ENCODE measurements at regions of chr19 and their contacts with region 1.

Region 1: GRCh38 chr19:924943-925525 is 801 bp upstream of the ARID3A start:
- DNase-seq: no peak
- ATAC-seq: peak; percentile 66

Region 2: DNA sequence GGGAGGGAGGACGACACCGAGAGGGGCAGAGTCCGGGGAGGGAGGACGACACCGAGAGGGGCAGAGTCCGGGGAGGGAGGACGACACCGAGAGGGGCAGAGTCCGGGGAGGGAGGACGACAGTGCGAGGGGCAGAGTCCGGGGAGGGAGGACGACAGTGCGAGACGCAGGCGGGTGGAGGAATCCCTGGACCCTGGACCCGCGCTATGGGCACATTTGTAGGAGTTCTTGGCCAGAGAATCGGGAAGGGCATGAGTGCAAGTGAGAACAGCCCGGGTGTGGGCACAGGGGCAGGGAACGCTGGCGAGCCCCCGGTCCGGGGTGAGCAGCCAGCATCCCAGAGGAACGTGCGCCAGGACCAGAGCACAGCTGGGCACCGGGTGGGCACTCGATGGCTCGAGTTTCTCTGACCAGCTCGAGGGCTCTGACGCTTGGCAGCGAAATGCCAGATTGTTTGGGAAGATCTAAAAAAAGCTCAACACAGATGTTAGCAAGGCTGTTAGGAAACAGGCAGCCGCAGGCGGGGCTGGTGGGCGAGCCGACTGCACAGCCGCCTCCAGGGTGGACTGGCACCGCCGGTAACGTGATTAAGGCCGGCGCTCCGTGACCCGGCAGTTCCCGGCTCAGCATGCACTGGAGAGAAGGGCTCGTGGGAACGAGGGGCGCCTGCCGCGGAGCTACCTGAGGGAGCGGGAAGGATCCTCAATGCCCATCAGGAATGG is 498.1 kb before region 1 on chr19:
- intact Hi-C with region 1: no loop called
- DNase-seq: peak; percentile 31
- ATAC-seq: no peak

Region 3: DNA sequence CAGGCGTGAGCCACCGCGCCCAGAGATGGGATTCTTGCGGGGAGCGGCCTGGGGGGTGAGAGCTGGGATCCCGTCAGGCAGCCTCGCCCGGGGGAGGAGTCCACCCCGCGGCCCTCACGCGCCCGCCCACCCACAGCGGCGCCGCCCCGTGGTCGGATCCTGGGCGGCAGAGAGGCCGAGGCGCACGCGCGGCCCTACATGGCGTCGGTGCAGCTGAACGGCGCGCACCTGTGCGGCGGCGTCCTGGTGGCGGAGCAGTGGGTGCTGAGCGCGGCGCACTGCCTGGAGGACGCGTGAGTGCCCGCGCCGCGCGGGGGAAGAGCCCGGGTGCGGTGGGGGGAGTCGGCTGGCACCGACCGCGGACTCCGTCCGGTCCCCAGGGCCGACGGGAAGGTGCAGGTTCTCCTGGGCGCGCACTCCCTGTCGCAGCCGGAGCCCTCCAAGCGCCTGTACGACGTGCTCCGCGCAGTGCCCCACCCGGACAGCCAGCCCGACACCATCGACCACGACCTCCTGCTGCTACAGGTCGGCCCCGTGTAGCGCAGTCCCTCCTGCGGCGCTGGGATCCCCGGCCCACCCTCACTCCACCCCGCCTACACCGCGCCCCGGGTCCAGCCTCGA is 64.4 kb before region 1 on chr19:
- intact Hi-C with region 1: loop called (anchors 5 kb)
- DNase-seq: peak; percentile 84
- ATAC-seq: peak; percentile 51

Region 4: DNA sequence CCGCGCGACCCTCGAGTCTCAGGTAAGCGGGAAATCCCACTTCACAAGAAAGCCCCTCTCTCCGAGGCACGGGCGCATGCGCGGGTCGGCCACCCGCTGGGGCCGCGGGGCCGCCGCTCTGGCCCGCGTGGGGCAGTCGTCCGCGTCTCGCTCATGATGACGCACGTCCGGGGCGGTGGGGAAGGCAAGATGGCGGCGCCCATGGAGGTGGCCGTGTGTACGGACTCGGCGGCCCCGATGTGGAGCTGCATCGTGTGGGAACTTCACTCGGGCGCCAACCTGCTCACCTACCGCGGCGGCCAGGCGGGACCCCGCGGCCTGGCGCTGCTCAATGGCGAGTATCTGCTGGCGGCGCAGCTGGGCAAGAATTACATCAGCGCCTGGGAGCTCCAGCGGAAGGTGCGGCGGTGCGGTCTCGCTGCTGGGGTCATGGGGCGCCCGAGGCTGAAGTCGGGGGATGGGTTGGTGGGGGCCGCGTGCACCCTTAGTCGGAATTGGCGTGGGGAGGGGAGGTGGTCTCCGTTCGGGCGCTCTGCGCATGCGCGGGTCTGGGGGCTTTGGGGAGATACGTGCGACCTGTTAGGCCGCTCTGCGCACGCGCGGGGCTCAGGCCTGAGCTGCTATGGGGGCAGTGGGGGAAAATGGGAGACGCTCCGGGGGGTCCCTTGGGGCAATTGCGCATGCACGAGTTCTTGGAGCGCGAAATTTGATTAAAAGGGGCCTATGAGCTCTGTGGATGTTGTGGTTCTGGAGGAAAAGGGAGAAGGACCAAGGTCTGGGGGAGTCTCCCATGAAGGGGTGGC is 59.3 kb after region 1 on chr19 and contains the start of gene WDR18:
- intact Hi-C with region 1: loop called (anchors 2 kb)
- DNase-seq: peak; percentile 97
- ATAC-seq: peak; percentile 98
- total RNA-seq, gene WDR18: 18.6 TPM

Region 5: GRCh38 chr19:1016647-1017114 is 91.6 kb after region 1 on chr19:
- intact Hi-C with region 1: no loop called
- DNase-seq: no peak
- ATAC-seq: no peak